K562 (cell line): ENCODE measurements at regions of chr9 and their contacts with region 1.

Region 1: GRCh38 chr9:89597711-89598625 is 6.8 kb upstream of the GADD45G start:
- DNase-seq: peak; percentile 23 to 62 (median 28)
- ATAC-seq: peak; percentile 78
- H3K4me3 ChIP-seq: no peak overlapping the region
- H3K27ac ChIP-seq: no peak overlapping the region
- H3K4me1 ChIP-seq: no peaks in the 10 kb centered on the region
- H3K27me3 ChIP-seq: peaks cover 0 to 10% of the 10 kb centered on the region in 2 experiments; a peak in 2 of 5 replicates
- CTCF ChIP-seq: peak; percentile 61 to 74 (median 73)
- EP300 ChIP-seq: no peak
- POLR2A ChIP-seq: no peak
- RAD21 ChIP-seq: peak; percentile 56 to 78

Region 2: DNA sequence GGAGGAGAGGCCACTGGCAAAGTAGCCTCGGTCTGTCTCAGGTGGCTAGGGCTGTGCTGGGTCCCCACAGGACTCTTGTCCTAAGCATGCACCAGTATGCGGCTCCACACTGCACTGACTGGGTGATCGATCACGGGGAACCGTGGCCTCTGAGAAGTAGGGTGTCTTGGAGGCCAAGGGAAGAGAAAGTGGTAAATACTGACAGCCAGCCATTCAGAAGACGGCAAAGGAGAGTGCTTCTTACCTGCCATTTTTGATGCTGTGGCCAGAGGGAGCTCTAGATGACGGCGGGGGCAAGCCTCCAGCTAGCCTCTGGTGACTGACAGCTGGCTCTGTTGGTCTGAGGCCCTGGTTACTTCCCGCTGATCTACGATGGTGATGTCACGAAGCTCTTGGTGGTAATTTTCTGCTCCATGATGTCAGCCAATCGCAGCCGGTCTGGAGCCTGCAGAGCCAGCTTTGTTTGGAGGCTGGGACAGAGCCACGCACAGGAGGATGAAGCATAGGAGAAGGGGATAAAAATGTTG is 33.6 kb before region 1 on chr9:
- CTCF ChIA-PET with region 1: no interaction called
- POLR2A ChIA-PET with region 1: no interaction called
- in situ Hi-C with region 1: no loop called
- intact Hi-C with region 1: no loop called
- DNase-seq: peak; percentile 9 to 32 (median 19)
- ATAC-seq: peak; percentile 85
- H3K4me3 ChIP-seq: no peak overlapping the region
- H3K27ac ChIP-seq: no peak overlapping the region
- H3K4me1 ChIP-seq: no peaks in the 10 kb centered on the region
- H3K27me3 ChIP-seq: peaks cover 0 to 9% of the 10 kb centered on the region in 2 experiments; a peak in 2 of 5 replicates
- CTCF ChIP-seq: peak; percentile 19 to 35 (median 30); a peak in 3 of 6 replicates
- EP300 ChIP-seq: no peak
- POLR2A ChIP-seq: no peak
- RAD21 ChIP-seq: no peak

Region 3: DNA sequence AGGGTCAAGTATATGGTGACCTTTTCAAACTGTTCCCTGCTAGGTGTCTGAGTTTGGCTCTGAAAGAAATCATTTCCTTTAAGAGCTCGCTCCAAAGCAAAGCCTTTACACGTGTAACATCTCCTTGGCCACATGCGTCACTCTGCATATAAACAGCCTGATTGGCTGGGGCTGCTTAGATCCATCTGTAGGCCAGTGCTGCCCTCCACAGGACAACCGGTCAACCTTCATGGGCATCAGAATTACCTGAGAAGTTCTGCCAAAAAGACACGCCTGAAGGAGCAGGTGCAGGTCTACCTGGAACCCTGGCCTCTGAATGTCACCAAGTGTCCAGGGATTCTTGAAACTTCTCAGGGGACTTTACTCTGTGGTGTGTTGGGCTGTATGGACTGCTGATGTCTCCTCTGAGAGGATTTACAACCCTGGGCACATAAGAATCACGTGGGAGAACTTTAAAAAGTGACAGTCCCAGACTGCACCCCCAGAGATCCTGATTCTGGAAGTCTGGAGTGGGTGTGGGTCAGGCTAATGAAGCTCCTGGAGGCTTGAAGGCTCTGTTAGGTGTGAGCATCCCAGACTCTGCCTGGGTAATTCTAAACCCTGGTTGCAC is 504.4 kb after region 1 on chr9:
- CTCF ChIA-PET with region 1: interaction called, 11 read pairs
- POLR2A ChIA-PET with region 1: no interaction called
- in situ Hi-C with region 1: loop called (anchors 5 kb)
- intact Hi-C with region 1: loop called (anchors 1 kb)
- DNase-seq: peak; percentile 62 to 72 (median 68)
- ATAC-seq: peak; percentile 96
- H3K4me3 ChIP-seq: no peak overlapping the region
- H3K27ac ChIP-seq: no peak overlapping the region
- H3K4me1 ChIP-seq: no peaks in the 10 kb centered on the region
- H3K27me3 ChIP-seq: no peaks in the 10 kb centered on the region; a peak in 1 of 5 replicates
- CTCF ChIP-seq: peak; percentile 53 to 67 (median 60)
- EP300 ChIP-seq: no peak
- POLR2A ChIP-seq: no peak
- RAD21 ChIP-seq: peak; percentile 60 to 70

Region 4: GRCh38 chr9:90894986-90895687 is 1297.2 kb after region 1 on chr9:
- CTCF ChIA-PET with region 1: no interaction called
- POLR2A ChIA-PET with region 1: no interaction called
- in situ Hi-C with region 1: loop called (anchors 25 kb)
- intact Hi-C with region 1: no loop called
- DNase-seq: peak; percentile 6 to 54 (median 34)
- ATAC-seq: peak; percentile 81
- H3K4me3 ChIP-seq: no peak overlapping the region
- H3K27ac ChIP-seq: no peak overlapping the region
- H3K4me1 ChIP-seq: no peaks in the 10 kb centered on the region
- H3K27me3 ChIP-seq: no peaks in the 10 kb centered on the region
- CTCF ChIP-seq: peak; percentile 41 to 69 (median 51); a peak in 5 of 6 replicates
- EP300 ChIP-seq: no peak
- POLR2A ChIP-seq: no peak
- RAD21 ChIP-seq: no peak